HepG2 (cell line): ENCODE measurements at regions of chr18 and their contacts with region 1.

Region 1: DNA sequence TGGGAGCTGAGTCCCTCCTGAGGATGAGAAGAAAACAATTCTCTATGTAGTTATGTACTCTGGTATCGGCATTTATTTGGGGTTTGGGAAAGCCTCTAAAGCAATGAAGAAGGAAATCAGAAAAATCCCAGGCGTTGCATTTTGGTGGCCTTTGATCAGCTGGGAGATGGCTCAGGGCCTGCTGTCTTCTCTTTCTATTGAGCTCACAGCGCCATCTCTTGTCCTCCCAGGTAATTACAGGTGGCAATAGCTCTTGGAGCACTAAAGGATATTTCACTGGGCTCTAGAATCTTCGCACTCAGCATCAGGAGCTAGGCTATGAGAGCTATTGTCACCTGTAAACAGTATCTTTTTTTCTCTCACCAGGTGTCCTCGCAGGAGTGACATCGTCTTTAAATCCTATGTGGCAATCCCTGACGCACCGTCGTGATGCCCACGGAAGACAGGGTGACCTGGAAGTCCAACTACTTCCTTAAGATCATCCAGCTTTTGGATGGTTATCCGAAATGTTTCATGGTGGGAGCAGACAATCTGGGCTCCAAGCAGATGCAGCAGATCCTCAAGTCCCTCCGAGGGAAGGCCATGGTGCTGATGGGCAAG is 76.1 kb upstream of the PMAIP1 start:
- DNase-seq: peak; percentile 60
- ATAC-seq: peak; percentile 89
- H3K4me3 ChIP-seq: no peak overlapping the region
- H3K27ac ChIP-seq: no peak overlapping the region
- H3K4me1 ChIP-seq: no peaks in the 10 kb centered on the region
- H3K27me3 ChIP-seq: no peaks in the 10 kb centered on the region
- CTCF ChIP-seq: peak; percentile 79
- EP300 ChIP-seq: no peak
- POLR2A ChIP-seq: no peak
- RAD21 ChIP-seq: peak; percentile 53; the same call in 1 of the 2 replicates

Region 2: GRCh38 chr18:59249205-59249774 is 574.4 kb before region 1 on chr18:
- CTCF ChIA-PET with region 1: interaction called, 3 read pairs
- POLR2A ChIA-PET with region 1: no interaction called
- in situ Hi-C with region 1: no loop called
- intact Hi-C with region 1: loop called (anchors 2 kb)
- DNase-seq: peak; percentile 58
- ATAC-seq: peak; percentile 82
- H3K4me3 ChIP-seq: no peak overlapping the region
- H3K27ac ChIP-seq: no peak overlapping the region
- H3K4me1 ChIP-seq: no peaks in the 10 kb centered on the region
- H3K27me3 ChIP-seq: peaks cover 3 to 6% of the 10 kb centered on the region in 2 experiments; a peak in 3 of 5 replicates
- CTCF ChIP-seq: peak; percentile 77
- EP300 ChIP-seq: no peak
- POLR2A ChIP-seq: no peak
- RAD21 ChIP-seq: peak; percentile 60

Region 3: DNA sequence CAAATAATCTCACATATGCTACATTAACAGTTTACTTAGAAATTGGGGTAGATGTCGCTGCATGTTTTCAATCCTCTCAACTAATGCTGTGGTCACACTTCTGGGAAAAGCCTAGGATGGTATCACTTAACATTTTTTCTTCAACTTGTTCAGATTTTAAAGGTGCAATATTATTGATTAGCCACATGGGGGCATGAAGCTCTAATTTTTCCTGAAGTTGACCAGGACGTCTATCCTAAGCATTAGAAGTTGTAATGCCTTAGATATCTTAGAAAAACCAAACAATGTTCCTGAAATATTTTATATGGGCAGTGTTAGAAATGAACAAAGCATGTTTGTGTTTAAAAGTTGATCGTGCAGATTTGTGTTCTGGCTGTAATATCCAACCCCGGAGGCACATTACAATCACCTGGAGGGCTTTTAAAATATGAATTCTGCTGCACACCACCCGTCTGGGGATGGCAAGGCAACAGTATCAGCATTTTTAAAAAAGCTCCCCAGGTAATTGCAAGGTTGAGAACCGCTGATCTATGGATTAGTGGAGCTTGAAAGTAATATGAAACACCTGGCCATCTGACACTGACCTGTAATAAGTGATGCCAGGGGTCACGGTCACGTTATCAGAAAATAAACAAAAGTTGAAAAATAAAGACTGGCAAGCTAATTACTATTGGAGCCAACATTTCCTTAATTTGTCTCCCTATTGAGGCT is 364.2 kb before region 1 on chr18:
- CTCF ChIA-PET with region 1: interaction called, 22 read pairs
- POLR2A ChIA-PET with region 1: no interaction called
- in situ Hi-C with region 1: loop called (anchors 10 kb)
- intact Hi-C with region 1: no loop called
- DNase-seq: peak; percentile 16
- ATAC-seq: peak; percentile 33; the same call in 2 of the 3 replicates
- H3K4me3 ChIP-seq: no peak overlapping the region
- H3K27ac ChIP-seq: no peak overlapping the region
- H3K4me1 ChIP-seq: peaks cover 18% of the 10 kb centered on the region
- H3K27me3 ChIP-seq: peaks cover 2 to 53% of the 10 kb centered on the region in 2 experiments; a peak in 3 of 5 replicates
- CTCF ChIP-seq: peak; percentile 66
- EP300 ChIP-seq: no peak
- POLR2A ChIP-seq: no peak
- RAD21 ChIP-seq: 0 out of 2 replicates have a peak, but pooled peaks have one; percentile 16

Region 4: DNA sequence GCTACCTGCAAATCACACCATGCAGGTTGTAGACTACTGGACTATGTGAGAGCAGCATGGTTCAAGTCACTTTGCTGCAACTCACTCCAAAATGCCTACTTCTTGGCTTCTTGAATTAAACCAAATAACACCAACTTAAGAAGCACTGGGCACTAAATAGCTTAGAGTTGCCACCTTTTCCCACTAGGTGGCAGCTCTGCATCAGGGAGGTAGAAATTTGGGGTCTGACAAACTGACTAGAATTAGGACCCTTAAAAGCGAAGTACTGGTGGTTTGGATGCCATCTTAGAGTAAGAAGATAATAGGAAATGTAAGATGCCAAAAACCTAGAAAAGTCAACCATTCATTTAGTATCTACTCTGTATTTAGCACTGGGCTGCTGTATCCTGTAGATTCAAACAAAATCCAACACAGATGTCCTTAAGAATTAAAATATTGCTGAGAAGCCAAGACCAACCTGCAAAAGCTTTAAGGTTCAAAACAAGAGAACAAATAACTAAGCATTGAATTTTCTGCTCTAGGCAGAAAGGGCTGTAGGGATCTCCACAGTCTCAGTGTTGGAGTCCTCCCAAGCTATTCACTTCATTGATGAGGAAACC is 192.0 kb before region 1 on chr18:
- CTCF ChIA-PET with region 1: no interaction called
- POLR2A ChIA-PET with region 1: no interaction called
- in situ Hi-C with region 1: no loop called
- intact Hi-C with region 1: loop called (anchors 1 kb)
- DNase-seq: peak; percentile 1
- ATAC-seq: no peak
- H3K4me3 ChIP-seq: no peak overlapping the region
- H3K27ac ChIP-seq: no peak overlapping the region
- H3K4me1 ChIP-seq: no peaks in the 10 kb centered on the region
- H3K27me3 ChIP-seq: peaks cover 0 to 1% of the 10 kb centered on the region in 2 experiments; a peak in 2 of 5 replicates
- CTCF ChIP-seq: peak; percentile 52
- EP300 ChIP-seq: no peak
- POLR2A ChIP-seq: no peak
- RAD21 ChIP-seq: no peak

Region 5: DNA sequence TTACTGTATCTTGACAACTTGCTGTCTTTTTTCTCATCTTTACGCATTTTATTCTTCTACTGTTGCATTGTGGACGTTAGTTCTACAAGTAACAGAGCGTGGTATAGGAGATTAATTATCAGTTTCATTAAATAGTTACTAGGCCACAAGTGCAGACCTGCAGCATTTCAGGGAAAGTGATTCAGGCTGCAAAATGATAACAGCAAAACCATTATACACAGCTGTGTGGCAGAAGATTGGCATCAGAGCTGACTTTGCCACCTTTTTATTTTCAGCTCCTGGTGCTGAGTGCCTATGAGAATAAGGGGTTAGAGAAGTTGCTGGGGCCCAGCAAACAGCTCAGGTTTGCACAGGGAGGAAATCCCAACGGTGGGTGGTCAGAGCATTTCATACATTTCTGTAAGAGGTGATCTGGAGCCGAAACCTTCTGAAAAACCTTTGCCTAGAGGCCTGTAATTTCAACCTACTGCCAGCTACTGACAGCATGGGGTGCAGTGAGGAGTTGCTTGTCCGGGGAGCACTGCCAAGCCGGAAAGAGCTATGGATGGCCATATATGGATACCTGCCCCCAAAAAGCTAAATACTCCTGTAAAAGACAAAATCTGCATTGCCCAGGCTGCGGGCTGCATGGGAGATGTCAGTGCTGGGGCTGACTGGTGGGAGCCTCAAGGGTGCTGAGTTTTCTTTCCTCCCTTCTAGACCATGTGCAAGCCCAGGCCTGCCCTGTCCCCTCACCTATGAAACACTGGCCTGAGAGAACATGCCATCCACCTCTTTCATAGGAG is 123.8 kb before region 1 on chr18:
- CTCF ChIA-PET with region 1: no interaction called
- POLR2A ChIA-PET with region 1: no interaction called
- in situ Hi-C with region 1: no loop called
- intact Hi-C with region 1: loop called (anchors 10 kb)
- DNase-seq: no peak
- ATAC-seq: no peak
- H3K4me3 ChIP-seq: no peak overlapping the region
- H3K27ac ChIP-seq: no peak overlapping the region
- H3K4me1 ChIP-seq: no peaks in the 10 kb centered on the region
- H3K27me3 ChIP-seq: peaks cover 3 to 32% of the 10 kb centered on the region in 2 experiments
- CTCF ChIP-seq: no peak
- EP300 ChIP-seq: no peak
- POLR2A ChIP-seq: no peak
- RAD21 ChIP-seq: no peak

Region 6: GRCh38 chr18:59783138-59783537 is 40.6 kb before region 1 on chr18:
- CTCF ChIA-PET with region 1: interaction called, 5 read pairs
- POLR2A ChIA-PET with region 1: no interaction called
- in situ Hi-C with region 1: no loop called
- intact Hi-C with region 1: loop called (anchors 1 kb)
- DNase-seq: peak; percentile 72
- ATAC-seq: peak; percentile 100
- H3K4me3 ChIP-seq: no peak overlapping the region
- H3K27ac ChIP-seq: no peak overlapping the region
- H3K4me1 ChIP-seq: no peaks in the 10 kb centered on the region
- H3K27me3 ChIP-seq: no peaks in the 10 kb centered on the region; a peak in 2 of 5 replicates
- CTCF ChIP-seq: peak; percentile 35; the same call in 1 of the 2 replicates
- EP300 ChIP-seq: no peak
- POLR2A ChIP-seq: no peak
- RAD21 ChIP-seq: 0 out of 2 replicates have a peak, but pooled peaks have one; percentile 13